Endothelial cell of umbilical vein (primary cell): ENCODE measurements at regions of chr3 and their contacts with region 1.

Region 1: DNA sequence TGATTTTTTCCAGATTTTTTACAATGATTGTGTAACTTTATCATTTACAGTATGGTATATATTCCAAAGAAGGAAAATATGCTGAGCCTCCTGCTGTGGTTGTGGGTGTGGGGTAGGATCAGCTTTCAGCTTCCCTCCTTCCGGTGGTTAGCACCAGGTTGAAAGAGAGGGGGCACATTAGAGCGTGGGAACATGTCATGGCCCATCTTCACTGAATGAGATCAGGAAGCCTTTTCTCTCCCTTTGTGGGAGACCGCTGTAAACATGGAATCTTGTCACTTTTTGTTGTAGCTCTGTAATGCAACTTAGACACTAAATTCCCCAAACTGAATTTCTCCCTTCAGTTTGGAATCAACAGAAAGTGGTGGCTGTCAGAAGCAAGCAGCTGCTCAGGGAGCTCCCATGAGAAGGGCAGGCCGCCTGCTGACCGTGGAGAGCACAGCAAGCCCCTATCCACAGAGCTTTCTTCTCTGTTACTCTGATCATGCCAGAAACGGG is 86.7 kb upstream of the LIMD1 start:
- DNase-seq: peak; percentile 53
- H3K4me3 ChIP-seq: no peak overlapping the region
- H3K27ac ChIP-seq: no peak overlapping the region
- H3K4me1 ChIP-seq: peaks cover 8% of the 10 kb centered on the region
- H3K27me3 ChIP-seq: no peaks in the 10 kb centered on the region
- CTCF ChIP-seq: peak; percentile 29 to 70
- POLR2A ChIP-seq: no peak

Region 2: DNA sequence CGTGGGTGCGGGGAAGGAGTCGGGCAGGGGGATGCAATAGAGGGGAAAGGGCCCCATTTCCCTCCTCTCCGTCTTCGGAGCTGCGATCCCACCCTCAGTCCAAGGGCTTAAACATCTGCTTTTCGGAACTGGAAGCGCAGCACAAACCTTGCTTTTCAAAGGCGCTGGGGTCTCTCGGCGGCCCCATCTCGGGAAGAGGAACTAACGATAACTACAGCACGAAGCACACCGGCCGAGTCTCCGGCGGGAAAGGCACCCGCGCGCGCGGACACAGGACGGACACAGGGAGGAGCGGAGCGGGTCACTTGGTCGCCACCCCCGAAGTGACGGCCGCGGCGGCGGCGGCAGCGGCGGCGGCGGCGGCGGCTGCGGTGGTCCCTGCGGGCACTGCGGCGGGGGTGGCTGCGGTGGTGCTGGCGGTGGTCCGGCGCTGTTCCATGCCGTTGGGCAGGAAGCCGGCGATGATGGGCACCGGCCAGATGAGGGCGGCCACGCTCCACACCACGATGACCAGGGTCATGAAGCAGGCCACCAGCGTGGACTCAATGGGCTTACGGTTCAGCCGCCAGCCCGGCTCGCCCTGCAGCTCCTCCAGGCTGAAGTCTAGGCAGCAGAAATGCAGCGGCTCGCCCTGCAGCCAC is 282.9 kb before region 1 on chr3:
- CTCF ChIA-PET with region 1: interaction called, 39 read pairs
- POLR2A ChIA-PET with region 1: no interaction called
- dilution Hi-C with region 1: no loop called
- intact Hi-C with region 1: loop called (anchors 1 kb)
- DNase-seq: peak; percentile 64
- H3K4me3 ChIP-seq: peak overlapping the region; percentile 12 to 76 (median 45)
- H3K27ac ChIP-seq: no peak overlapping the region
- H3K4me1 ChIP-seq: peaks cover 10% of the 10 kb centered on the region
- H3K27me3 ChIP-seq: peaks cover 20 to 42% of the 10 kb centered on the region in 2 experiments
- CTCF ChIP-seq: peak; percentile 52 to 72
- POLR2A ChIP-seq: no peak

Region 3: GRCh38 chr3:45462522-45463265 is 45.2 kb before region 1 on chr3:
- CTCF ChIA-PET with region 1: no interaction called
- POLR2A ChIA-PET with region 1: no interaction called
- dilution Hi-C with region 1: no loop called
- intact Hi-C with region 1: no loop called
- DNase-seq: no peak
- H3K4me3 ChIP-seq: no peak overlapping the region
- H3K27ac ChIP-seq: no peak overlapping the region
- H3K4me1 ChIP-seq: no peaks in the 10 kb centered on the region
- H3K27me3 ChIP-seq: no peaks in the 10 kb centered on the region
- CTCF ChIP-seq: no peak
- POLR2A ChIP-seq: no peak

Region 4: GRCh38 chr3:45593708-45594609 is 86.1 kb after region 1 on chr3:
- CTCF ChIA-PET with region 1: interaction called, 7 read pairs
- POLR2A ChIA-PET with region 1: no interaction called
- dilution Hi-C with region 1: no loop called
- intact Hi-C with region 1: loop called (anchors 1 kb)
- DNase-seq: peak; percentile 77
- H3K4me3 ChIP-seq: peak overlapping the region; percentile 61 to 67 (median 64)
- H3K27ac ChIP-seq: peak overlapping the region; percentile 70
- H3K4me1 ChIP-seq: peaks cover 38% of the 10 kb centered on the region
- H3K27me3 ChIP-seq: no peaks in the 10 kb centered on the region
- CTCF ChIP-seq: no peak
- POLR2A ChIP-seq: peak; percentile 59

Region 5: DNA sequence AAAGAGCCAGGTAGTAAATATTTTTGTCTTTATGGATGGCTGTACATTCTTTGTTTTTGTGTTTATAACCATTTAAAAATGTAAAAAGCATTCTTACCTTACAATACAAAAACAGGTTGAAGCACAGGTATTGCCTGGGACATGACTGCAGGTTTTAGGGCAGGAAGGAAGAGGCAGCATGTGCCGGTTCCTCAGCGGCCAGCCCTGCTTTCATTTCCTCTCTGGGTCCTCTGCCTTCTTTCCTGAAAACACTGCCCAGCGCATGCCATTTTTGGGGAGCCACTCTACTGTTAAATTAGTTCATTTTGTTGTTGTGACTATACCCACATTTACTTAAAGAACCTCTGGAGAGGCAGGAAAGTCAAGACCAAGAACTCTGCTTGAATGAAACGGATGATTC is 233.9 kb after region 1 on chr3:
- CTCF ChIA-PET with region 1: no interaction called
- POLR2A ChIA-PET with region 1: no interaction called
- dilution Hi-C with region 1: no loop called
- intact Hi-C with region 1: loop called (anchors 5 kb)
- DNase-seq: no peak
- H3K4me3 ChIP-seq: no peak overlapping the region
- H3K27ac ChIP-seq: no peak overlapping the region
- H3K4me1 ChIP-seq: no peaks in the 10 kb centered on the region
- H3K27me3 ChIP-seq: no peaks in the 10 kb centered on the region
- CTCF ChIP-seq: no peak
- POLR2A ChIP-seq: no peak

Region 6: DNA sequence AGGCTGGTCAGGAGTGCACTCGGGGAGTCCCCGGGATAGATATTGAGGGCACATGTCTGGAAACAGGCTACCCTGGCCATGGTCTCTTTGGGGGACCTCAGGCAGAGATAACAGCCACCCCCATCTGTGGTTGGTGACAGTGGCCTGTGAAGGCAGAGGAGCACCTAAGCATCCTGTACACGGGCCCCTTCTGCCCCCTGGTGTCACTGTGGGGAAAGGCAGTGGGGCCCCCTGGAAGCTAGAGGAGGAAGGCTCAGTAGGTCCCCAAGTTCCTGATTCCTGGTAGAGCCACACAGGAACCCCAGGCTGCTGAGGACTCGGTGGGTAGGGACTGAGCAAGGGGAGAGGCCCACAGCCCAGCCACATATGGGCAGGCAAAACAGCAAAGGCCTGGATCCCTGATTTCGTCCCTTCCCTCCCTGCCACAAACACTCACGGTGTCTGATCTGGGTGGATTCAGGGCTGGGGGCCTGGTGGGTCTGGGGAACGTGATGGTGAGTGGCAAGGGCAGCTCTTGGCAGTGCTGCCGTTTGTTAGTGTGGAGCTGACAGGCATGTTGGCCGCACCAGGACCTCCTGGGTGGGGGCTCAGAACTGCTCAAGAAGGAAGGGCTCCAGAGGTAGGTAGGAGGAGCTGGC is 421.3 kb after region 1 on chr3:
- CTCF ChIA-PET with region 1: no interaction called
- POLR2A ChIA-PET with region 1: no interaction called
- dilution Hi-C with region 1: no loop called
- intact Hi-C with region 1: loop called (anchors 1 kb)
- DNase-seq: peak; percentile 12
- H3K4me3 ChIP-seq: no peak overlapping the region
- H3K27ac ChIP-seq: no peak overlapping the region
- H3K4me1 ChIP-seq: no peaks in the 10 kb centered on the region
- H3K27me3 ChIP-seq: no peaks in the 10 kb centered on the region
- CTCF ChIP-seq: peak; percentile 54 to 79
- POLR2A ChIP-seq: no peak

Region 7: DNA sequence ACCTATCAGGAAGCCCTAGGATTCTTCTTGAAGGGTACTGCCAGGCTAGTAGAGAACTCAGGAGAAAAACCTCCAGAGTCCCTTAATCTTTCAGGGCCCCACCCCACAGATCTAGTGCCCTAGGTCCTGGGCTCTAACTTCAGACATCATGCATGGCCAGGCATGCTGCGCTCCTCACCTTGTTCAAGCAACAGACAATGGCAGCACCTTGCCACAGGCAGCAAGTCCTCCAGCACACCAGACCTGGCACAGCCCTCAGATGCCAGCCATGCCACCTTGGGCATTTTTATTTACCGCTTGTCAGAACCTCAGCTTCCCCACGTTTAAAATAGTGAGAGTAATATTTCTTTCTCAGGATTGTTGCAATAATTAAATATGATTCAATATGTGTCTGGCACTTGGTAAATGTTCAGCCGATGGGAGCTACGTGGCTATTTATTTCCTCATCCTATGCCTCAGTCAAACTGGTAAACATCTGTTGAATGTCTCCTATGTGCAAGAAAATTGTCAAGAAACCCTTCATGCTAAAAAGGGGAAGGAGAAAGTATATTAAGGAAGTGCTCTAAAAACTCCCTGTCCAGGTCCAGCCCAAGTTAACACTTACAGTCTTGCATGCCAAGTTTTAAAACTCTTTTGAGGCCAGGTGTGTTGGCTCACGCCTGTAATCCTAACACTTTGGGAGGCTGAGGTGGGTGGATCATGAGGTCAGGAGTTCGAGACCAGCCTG is 714.7 kb after region 1 on chr3:
- CTCF ChIA-PET with region 1: no interaction called
- POLR2A ChIA-PET with region 1: no interaction called
- dilution Hi-C with region 1: no loop called
- intact Hi-C with region 1: no loop called
- DNase-seq: no peak
- H3K4me3 ChIP-seq: no peak overlapping the region
- H3K27ac ChIP-seq: no peak overlapping the region
- H3K4me1 ChIP-seq: no peaks in the 10 kb centered on the region
- H3K27me3 ChIP-seq: no peaks in the 10 kb centered on the region
- CTCF ChIP-seq: no peak
- POLR2A ChIP-seq: no peak